A549 (cell line): ENCODE measurements at regions of chr22 and their contacts with region 1.

Region 1: DNA sequence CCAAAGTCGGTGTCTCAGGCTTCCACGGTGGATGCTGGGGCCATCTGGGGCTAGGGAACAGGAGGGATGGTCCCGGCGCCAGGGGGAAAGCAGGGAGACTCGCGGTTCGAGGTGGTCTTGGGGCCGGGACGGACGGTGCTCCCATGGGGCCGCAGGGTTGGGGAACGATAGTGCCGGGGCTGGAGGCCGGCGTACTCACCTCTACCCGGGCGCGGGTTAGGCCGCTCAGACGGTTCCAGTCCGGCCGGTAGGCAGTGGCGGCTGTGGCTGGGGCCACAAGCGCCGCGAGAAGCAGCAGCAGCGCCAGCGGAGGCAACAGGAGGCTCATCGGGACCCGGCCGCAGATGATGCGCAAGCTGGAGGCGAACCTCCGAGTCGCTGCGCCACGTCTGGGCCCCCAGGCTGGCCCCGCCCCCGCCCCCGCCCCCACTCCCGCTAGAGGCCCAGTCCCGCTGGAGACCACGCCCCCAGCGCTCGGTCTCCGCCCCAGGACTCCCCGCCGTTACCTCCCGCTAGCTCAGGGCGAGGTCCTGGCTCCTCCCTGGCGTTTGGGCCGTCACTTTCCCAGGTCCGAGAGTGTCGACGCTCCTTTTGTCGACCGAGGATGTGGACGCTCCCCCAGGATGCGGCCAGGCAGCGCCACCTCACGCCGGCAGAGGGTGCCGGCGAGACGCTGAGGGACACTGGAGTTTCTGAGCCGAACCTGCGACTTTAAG is at the start of gene SELENOM:
- DNase-seq: peak; percentile 80 to 96
- ATAC-seq: peak; percentile 94 to 98
- H3K4me3 ChIP-seq: peak within 1 kb of the TSS; percentile 66
- H3K27ac ChIP-seq: peak within 1 kb of the TSS; percentile 78 to 91
- H3K4me1 ChIP-seq: peaks cover 7% of the 10 kb centered on the region
- CTCF ChIP-seq: peak; percentile 77
- EP300 ChIP-seq: no peak
- POLR2A ChIP-seq: peak; percentile 55
- RAD21 ChIP-seq: peak; percentile 74 to 84
- polyA plus RNA-seq, gene SELENOM: 14.2 and 15.3 TPM in 2 replicates

Region 2: GRCh38 chr22:31119026-31119717 is 11.8 kb after region 1 on chr22:
- CTCF ChIA-PET with region 1: interaction called, 19 read pairs
- POLR2A ChIA-PET with region 1: interaction called, 8 read pairs
- DNase-seq: no peak
- ATAC-seq: no peak
- H3K4me3 ChIP-seq: no peak overlapping the region
- H3K27ac ChIP-seq: no peak overlapping the region
- H3K4me1 ChIP-seq: peaks cover 11% of the 10 kb centered on the region
- CTCF ChIP-seq: no peak
- EP300 ChIP-seq: no peak
- POLR2A ChIP-seq: no peak
- RAD21 ChIP-seq: no peak

Region 3: GRCh38 chr22:31133911-31134310 is 26.6 kb after region 1 on chr22:
- CTCF ChIA-PET with region 1: interaction called, 15 read pairs
- POLR2A ChIA-PET with region 1: no interaction called
- DNase-seq: no peak
- ATAC-seq: no peak
- H3K4me3 ChIP-seq: no peak overlapping the region
- H3K27ac ChIP-seq: no peak overlapping the region
- H3K4me1 ChIP-seq: no peaks in the 10 kb centered on the region
- CTCF ChIP-seq: no peak
- EP300 ChIP-seq: no peak
- POLR2A ChIP-seq: no peak
- RAD21 ChIP-seq: no peak

Region 4: DNA sequence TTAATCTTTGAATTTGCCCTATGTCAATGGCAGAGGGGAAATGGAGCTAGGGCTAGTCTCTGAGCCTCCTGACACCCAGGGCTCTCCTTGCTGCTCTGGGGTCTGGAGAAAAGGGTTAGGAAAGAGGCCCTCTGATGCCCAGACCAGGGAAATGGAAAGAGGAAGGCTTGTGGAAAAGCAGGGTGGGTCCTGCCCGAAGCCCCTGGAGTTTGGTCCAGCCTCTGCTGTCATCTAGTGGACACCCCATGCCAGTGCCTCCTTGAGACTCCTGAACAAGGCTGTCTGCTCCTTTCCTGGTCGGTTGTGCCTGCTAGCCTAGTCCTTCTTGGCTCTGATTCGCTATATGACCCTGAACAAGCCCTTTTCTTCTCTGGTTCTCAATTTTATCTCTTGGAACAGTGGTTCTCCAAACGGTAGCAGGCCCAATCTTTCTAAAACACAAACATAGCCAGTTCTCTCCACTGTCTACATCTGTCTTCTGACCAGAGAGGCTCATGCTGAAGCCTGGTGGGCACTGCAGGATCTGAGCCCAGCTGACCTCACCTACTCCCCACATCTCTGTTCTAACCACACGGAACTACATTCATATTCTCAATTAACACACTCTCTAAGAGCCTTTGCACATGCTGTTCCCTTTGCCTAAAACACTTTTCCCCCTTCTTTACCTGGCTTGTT is 41.8 kb after region 1 on chr22:
- CTCF ChIA-PET with region 1: interaction called, 50 read pairs
- POLR2A ChIA-PET with region 1: no interaction called
- DNase-seq: peak; percentile 72 to 75
- ATAC-seq: peak; percentile 98 to 99
- H3K4me3 ChIP-seq: no peak overlapping the region
- H3K27ac ChIP-seq: 0 out of 6 replicates have a peak overlapping the region, but pooled peaks of 1 of the 2 experiments have one; percentile 0
- H3K4me1 ChIP-seq: no peaks in the 10 kb centered on the region
- CTCF ChIP-seq: peak; percentile 90
- EP300 ChIP-seq: no peak
- POLR2A ChIP-seq: no peak
- RAD21 ChIP-seq: peak; percentile 91 to 92